Activated CD4-positive, alpha-beta memory T cell treated with anti-CD3 and anti-CD28 coated beads for 36 hours (primary cell): ENCODE measurements at regions of chr3 and their contacts with region 1.

Region 1: DNA sequence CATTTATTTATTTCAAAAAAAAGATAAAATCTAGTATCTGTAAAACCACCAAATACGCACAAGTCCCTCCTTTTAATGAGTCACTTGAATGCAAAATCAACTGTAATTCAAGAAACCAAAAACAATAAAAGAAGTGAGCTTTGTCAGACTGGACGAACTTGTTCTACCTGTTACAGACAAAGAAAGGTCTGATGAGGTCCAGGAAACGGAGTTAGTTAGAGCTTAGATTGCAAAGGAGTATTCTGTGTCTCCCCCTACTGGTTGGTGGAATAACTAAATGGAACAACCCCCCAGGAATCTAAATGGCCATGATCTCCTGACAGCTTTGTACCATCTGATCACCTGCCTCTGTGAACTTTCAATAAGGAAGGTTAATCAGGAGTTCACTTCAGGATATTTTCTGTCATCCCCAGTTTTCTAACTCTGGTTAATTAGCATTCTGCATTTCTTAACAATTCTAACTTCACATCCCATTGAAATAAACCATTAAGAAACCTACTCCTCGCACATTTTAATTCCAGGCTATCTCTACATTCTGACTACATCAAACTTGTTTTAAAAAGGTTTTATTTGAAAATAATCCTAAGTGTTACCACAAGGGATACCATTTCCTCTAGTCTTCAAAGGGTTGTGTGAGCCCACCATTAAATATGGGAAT is 333.0 kb upstream of the SATB1 start:
- DNase-seq: no peak
- H3K4me3 Mint-ChIP-seq: no peak overlapping the region
- H3K27ac Mint-ChIP-seq: peak overlapping the region; percentile 78
- H3K4me1 Mint-ChIP-seq: peaks cover 39% of the 10 kb centered on the region
- H3K27me3 Mint-ChIP-seq: no peaks in the 10 kb centered on the region

Region 2: DNA sequence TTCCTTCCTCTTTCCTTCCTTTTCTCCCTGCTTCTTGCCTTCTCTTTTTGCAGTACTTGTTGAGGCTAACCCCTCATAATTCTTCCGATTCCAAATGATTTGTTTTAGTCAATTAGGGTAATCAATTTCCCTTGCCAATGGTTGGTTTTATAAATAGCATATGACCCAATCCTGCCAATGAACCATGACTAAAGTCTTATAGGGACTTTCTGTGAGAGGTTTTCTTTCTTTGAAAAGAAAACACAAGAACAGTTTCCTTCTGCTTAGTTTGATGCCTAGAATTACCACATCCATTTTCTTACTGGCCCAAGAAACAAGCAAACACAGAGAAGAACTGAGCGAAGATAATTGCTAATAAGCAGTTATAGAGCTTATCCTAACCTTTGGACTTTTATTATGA is 40.6 kb before region 1 on chr3:
- CTCF ChIA-PET with region 1: interaction called, 4 read pairs
- POLR2A ChIA-PET with region 1: interaction called, 4 read pairs
- intact Hi-C with region 1: loop called (anchors 1 kb)
- DNase-seq: no peak
- H3K4me3 Mint-ChIP-seq: no peak overlapping the region
- H3K27ac Mint-ChIP-seq: peak overlapping the region; percentile 91
- H3K4me1 Mint-ChIP-seq: peaks cover 73% of the 10 kb centered on the region
- H3K27me3 Mint-ChIP-seq: no peaks in the 10 kb centered on the region

Region 3: DNA sequence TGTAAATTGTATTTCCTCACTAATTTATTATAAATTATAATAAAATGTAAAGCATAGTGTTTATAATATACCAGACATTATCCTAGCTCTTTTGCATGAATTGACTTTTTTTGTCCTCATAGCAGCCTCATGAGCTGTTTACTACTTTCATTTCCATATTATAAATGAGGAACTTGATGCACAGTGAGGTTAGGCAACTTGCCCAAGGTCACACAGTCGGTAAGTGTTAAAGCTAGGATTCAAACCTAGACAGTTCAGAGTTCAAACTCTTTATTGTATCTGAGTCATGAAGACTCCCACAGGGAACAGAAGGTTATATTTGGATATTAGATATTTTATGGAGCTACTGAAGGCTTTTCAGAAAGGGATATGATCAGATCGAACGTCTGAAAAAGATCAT is 10.8 kb before region 1 on chr3:
- CTCF ChIA-PET with region 1: interaction called, 12 read pairs
- POLR2A ChIA-PET with region 1: no interaction called
- intact Hi-C with region 1: no loop called
- DNase-seq: no peak
- H3K4me3 Mint-ChIP-seq: no peak overlapping the region
- H3K27ac Mint-ChIP-seq: no peak overlapping the region
- H3K4me1 Mint-ChIP-seq: peaks cover 71% of the 10 kb centered on the region
- H3K27me3 Mint-ChIP-seq: no peaks in the 10 kb centered on the region

Region 4: DNA sequence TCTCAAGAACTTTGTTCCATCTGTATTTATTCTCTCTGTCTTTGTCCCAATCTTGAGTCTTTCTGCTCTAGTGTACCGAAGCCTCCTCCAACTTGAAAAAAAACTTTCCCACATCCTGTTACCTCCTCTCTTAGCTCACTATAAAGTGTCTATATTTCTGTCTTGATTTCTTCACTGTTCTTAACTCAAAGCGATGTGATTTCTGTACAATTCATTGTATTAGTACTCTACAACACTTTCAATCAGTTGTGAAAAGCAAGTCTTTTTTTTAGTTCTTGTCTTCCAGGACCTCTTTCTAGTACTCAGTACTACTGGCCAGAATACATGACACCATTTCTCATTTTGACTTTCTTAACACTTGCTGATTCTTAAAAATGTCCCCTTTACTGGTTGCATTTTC is 20.4 kb after region 1 on chr3:
- CTCF ChIA-PET with region 1: no interaction called
- POLR2A ChIA-PET with region 1: no interaction called
- intact Hi-C with region 1: no loop called
- DNase-seq: no peak
- H3K4me3 Mint-ChIP-seq: no peak overlapping the region
- H3K27ac Mint-ChIP-seq: no peak overlapping the region
- H3K4me1 Mint-ChIP-seq: peaks cover 14% of the 10 kb centered on the region
- H3K27me3 Mint-ChIP-seq: no peaks in the 10 kb centered on the region

Region 5: GRCh38 chr3:19229086-19229485 is 470.9 kb after region 1 on chr3:
- CTCF ChIA-PET with region 1: no interaction called
- POLR2A ChIA-PET with region 1: no interaction called
- intact Hi-C with region 1: no loop called
- DNase-seq: no peak
- H3K4me3 Mint-ChIP-seq: no peak overlapping the region
- H3K27ac Mint-ChIP-seq: no peak overlapping the region
- H3K4me1 Mint-ChIP-seq: no peaks in the 10 kb centered on the region
- H3K27me3 Mint-ChIP-seq: no peaks in the 10 kb centered on the region